GM12878 (cell line): ENCODE measurements at regions of chr13 and their contacts with region 1.

Region 1: DNA sequence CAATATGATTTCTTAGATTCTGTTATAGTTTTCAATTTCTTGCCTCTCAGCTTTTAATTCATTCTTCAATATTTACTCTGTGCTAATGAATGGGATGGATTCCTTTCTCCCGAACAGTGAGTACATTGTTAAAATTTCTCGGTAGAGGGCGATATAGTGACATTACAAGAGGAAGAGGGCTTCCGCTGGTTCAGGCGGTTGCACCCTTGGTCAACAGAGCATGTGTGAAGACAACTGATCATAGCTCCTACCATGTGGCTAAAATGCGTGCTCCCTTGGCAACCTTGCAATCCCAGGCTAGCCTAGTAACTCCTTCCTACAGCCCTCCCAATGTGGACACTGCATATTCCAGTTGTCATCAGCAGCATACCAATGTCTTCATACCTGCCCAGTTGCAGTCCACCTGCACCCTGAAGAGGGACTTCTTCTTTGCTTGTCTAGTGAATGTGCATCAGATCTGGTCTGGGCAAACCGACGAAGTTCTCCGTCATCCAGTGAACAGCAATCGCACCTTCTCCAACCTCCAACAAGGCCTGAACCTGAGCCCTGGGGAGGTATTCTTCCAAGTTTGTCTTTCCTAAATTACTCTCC is 653.0 kb upstream of the GPC6 start:
- DNase-seq: no peak
- ATAC-seq: peak; percentile 90
- H3K4me3 ChIP-seq: no peak overlapping the region
- H3K27ac ChIP-seq: no peak overlapping the region
- H3K4me1 ChIP-seq: no peaks in the 10 kb centered on the region
- H3K27me3 ChIP-seq: no peaks in the 10 kb centered on the region
- CTCF ChIP-seq: peak in 2 of 3 experiments; percentile 17 to 39; a peak in 3 of 6 replicates
- EP300 ChIP-seq: no peak
- POLR2A ChIP-seq: no peak
- RAD21 ChIP-seq: peak; percentile 41; the same call in 1 of the 2 replicates

Region 2: GRCh38 chr13:94192431-94192975 is 1618.9 kb after region 1 on chr13:
- CTCF ChIA-PET with region 1: no interaction called
- POLR2A ChIA-PET with region 1: no interaction called
- RAD21 ChIA-PET with region 1: no interaction called
- SMC1A ChIA-PET with region 1: no interaction called
- in situ Hi-C with region 1: no loop called
- intact Hi-C with region 1: loop called (anchors 10 kb)
- DNase-seq: no peak
- ATAC-seq: peak; percentile 78
- H3K4me3 ChIP-seq: no peak overlapping the region
- H3K27ac ChIP-seq: no peak overlapping the region
- H3K4me1 ChIP-seq: no peaks in the 10 kb centered on the region
- H3K27me3 ChIP-seq: no peaks in the 10 kb centered on the region
- CTCF ChIP-seq: peak; percentile 24 to 43 (median 32); a peak in 3 of 6 replicates
- EP300 ChIP-seq: no peak
- POLR2A ChIP-seq: no peak
- RAD21 ChIP-seq: peak; percentile 31; the same call in 1 of the 2 replicates